Activated T-helper 1 cell treated with anti-CD3 and anti-CD28 coated beads, Interleukin-12 subunit alpha, Interleukin-12 subunit beta, Interleukin-2, Interleukin-4 antibody, amounts not matched to agents 30 ng/mL and 10 ng/mL and 1 ng/mL, durations not matched to agents 14 hours and 24 hours and 36 hours (primary cell): ENCODE measurements at regions of chr4 and their contacts with region 1.

Region 1: DNA sequence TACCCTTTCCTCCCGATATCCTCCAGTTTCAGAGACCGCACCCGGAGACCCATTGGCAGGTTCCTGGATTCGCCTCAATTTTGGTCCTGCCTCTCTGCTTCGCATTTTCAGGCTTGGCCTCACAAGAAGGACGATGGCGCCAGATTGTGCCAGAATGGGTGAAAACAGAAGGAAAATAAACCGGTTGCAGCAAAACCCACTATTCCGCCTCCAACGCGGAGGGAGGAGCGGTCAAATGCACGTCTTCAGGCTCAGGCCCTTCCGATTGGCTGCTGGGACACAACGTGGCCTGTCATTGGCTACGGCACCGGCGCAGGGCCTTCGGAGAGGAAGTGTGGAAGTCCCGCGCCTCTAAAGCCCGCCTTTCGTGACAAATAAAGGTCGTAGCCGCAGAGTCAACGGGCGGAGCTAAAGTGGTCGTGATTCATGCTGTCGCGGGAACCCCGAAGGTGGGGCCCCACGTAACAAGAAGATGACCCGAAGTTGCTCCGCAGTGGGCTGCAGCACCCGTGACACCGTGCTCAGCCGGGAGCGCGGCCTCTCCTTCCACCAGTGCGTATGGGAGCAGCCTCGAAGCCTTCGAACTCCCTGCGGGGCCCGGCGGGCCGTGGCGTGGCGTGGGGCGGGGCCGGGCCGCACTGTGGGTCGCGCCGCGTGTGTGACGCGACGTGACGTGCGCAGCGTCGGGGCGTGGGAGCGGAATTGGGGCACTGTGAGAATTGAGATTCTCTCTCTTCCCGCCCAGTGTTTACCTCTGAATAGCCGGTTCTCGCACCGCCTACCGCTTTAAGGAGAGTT is at the start of gene THAP9:
- DNase-seq: peak; percentile 98
- H3K4me3 Mint-ChIP-seq: no peak within 1 kb of the TSS
- H3K27ac Mint-ChIP-seq: no peak within 1 kb of the TSS
- H3K4me1 Mint-ChIP-seq: peaks cover 27% of the 10 kb centered on the region
- H3K27me3 Mint-ChIP-seq: peaks cover 2% of the 10 kb centered on the region
- total RNA-seq, gene THAP9: 1.9 and 2.3 TPM in 2 replicates

Region 2: GRCh38 chr4:81494031-81494431 is 1406.5 kb before region 1 on chr4:
- intact Hi-C with region 1: loop called (anchors 5 kb)
- DNase-seq: no peak
- H3K4me3 Mint-ChIP-seq: peak overlapping the region; percentile 50
- H3K27ac Mint-ChIP-seq: peak overlapping the region; percentile 25
- H3K4me1 Mint-ChIP-seq: peaks cover 43% of the 10 kb centered on the region
- H3K27me3 Mint-ChIP-seq: peaks cover 10% of the 10 kb centered on the region

Region 3: DNA sequence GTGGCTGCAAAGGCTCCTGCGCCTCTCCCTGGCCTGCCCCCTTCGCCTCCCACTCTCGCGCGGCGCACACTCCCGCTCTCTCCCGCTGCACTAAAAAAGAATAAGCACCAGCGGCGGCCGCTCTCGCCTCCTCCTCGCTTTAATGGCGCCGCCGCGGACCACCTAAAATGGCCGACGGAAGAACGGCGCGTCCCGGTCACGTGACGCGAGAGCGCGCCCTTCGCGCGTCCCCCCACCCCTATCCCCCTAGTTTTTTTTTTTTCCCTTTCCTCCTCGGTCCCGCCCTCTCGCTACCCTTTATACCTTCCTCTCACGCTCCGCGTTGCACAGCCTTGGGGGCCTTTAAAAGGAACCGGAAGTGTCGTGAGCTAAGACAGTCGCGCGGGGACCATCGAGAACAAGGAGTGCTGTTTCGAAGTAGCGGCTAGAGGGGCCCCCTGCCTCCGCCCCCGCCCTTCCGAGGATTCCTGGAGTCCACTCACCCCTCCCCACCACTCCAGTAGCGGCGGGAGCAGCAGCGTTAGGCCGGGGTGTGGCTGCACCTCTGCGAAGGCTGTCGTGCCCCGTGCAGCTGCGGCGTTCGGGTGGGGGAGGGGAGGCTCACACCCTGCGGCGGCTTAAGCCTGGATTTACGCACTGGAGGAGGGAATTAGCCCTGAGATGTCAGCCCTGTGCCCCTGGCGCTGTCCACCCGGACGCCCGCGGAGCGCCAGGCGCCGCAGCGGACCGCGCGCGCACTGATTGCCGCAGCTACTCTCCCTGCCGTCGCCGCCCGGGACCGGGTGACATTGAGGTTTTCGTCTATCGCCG is 526.5 kb before region 1 on chr4 and contains the start of gene HNRNPD:
- intact Hi-C with region 1: loop called (anchors 1 kb)
- DNase-seq: peak; percentile 92
- H3K4me3 Mint-ChIP-seq: peak within 1 kb of the TSS; percentile 99
- H3K27ac Mint-ChIP-seq: peak within 1 kb of the TSS; percentile 100
- H3K4me1 Mint-ChIP-seq: peaks cover 37% of the 10 kb centered on the region
- H3K27me3 Mint-ChIP-seq: peaks cover 2% of the 10 kb centered on the region
- total RNA-seq, gene HNRNPD: 434 and 438 TPM in 2 replicates

Region 4: GRCh38 chr4:82851885-82852750 is 48.4 kb before region 1 on chr4:
- intact Hi-C with region 1: loop called (anchors 1 kb)
- DNase-seq: no peak
- H3K4me3 Mint-ChIP-seq: no peak overlapping the region
- H3K27ac Mint-ChIP-seq: peak overlapping the region; percentile 73
- H3K4me1 Mint-ChIP-seq: peaks cover 14% of the 10 kb centered on the region
- H3K27me3 Mint-ChIP-seq: no peaks in the 10 kb centered on the region

Region 5: DNA sequence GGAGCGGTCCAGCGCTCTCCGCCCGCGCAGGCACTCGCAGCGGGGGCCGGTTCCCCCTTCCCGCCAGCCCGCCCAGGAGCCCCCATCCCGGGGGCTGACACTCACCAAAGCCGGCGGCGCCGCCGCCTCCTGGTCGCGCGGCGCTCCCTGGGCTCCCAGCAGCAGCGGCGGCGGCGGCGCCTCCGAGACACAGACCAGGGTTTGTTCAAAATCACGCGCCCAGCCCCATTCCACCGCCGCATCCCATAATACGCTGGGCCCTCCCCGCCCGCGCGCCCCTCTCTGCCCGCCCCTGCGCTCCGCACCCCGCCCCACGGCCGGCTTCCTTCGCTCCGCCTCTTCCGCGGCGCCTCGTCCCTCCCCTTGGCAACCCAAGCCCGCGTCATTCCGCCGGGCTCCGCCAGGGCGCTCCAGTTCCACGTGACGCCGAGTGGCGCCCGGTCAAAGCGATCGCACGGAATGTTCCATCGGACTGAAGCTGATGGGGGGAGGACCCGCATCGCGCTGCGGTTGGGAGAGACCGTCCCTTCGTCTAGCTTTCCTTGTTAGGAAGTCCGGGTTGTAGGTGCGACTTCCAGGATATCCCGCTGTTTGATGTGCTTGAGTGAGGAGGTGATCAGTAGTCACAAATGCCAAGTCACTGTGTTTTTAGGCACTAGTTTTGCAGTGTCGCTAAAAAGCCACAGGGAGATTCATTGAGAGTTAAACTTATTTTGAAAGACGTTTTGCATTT is 112.3 kb after region 1 on chr4:
- intact Hi-C with region 1: loop called (anchors 1 kb)
- DNase-seq: peak; percentile 97
- H3K4me3 Mint-ChIP-seq: peak overlapping the region; percentile 91
- H3K27ac Mint-ChIP-seq: peak overlapping the region; percentile 92
- H3K4me1 Mint-ChIP-seq: peaks cover 45% of the 10 kb centered on the region
- H3K27me3 Mint-ChIP-seq: no peaks in the 10 kb centered on the region

Region 6: GRCh38 chr4:83217721-83218522 is 317.4 kb after region 1 on chr4:
- intact Hi-C with region 1: loop called (anchors 1 kb)
- DNase-seq: peak; percentile 73
- H3K4me3 Mint-ChIP-seq: peak overlapping the region; percentile 66
- H3K27ac Mint-ChIP-seq: peak overlapping the region; percentile 91
- H3K4me1 Mint-ChIP-seq: peaks cover 81% of the 10 kb centered on the region
- H3K27me3 Mint-ChIP-seq: peaks cover 2% of the 10 kb centered on the region

Region 7: GRCh38 chr4:83484500-83485461 is 584.3 kb after region 1 on chr4 and contains the start of gene ABRAXAS1:
- intact Hi-C with region 1: loop called (anchors 10 kb)
- DNase-seq: peak; percentile 91
- H3K4me3 Mint-ChIP-seq: peak within 1 kb of the TSS; percentile 90
- H3K27ac Mint-ChIP-seq: peak within 1 kb of the TSS; percentile 95
- H3K4me1 Mint-ChIP-seq: peaks cover 10% of the 10 kb centered on the region
- H3K27me3 Mint-ChIP-seq: peaks cover under 1% of the 10 kb centered on the region
- total RNA-seq, gene ABRAXAS1: 11.0 and 11.3 TPM in 2 replicates